HEK293 (cell line): ENCODE measurements at regions of chr15 and their contacts with region 1.

Region 1: DNA sequence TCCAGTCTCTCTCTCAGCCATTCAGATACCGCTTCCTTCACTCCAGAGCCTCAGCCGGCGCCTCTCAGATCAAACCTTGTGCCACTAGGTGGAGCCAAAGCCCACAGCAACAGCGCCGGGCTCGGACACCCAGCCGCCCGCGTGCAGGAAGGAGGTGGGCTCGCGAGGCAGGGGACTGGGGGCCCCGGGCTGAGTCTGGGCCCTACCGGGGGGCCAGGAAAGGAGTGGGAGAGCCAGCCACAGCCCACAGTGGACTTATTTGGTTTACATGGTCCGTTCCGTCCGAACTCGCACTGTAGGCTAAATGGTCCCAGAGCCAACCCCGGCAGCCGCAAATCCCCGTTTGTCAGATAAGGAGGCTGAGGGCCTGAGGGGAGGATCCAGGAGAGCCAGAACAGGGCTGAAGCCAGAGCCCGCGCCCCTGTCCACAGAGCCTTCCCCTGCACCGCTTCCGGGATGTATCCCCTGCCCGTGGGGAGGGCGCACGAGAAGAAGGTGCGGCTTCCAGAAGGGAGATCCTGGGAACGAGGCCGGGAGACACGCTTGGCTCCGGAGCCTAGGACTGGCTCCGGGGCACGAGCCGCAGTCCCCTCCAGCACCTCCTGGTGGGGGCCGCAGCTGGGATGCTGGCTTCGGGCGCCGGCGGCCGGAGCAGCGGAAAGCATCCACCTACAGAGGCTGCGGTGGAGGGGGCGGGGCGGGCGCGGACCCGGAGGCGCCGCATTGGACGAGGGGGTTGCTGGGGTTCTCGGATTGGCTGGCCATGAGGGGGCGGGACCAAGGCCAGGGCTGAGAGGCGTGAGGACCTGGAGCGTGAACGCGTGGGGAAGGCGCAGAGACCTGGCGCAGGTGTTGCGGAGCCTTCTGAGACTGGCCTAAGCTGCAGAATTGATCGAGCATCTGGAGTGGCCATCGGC is 6.5 kb upstream of the CYP11A1 start:
- H3K4me3 ChIP-seq: peak overlapping the region; percentile 45
- H3K27ac ChIP-seq: peak overlapping the region; percentile 54; the same call in 1 of the 2 replicates
- H3K4me1 ChIP-seq: peaks cover 9% of the 10 kb centered on the region
- CTCF ChIP-seq: peak; percentile 98

Region 2: DNA sequence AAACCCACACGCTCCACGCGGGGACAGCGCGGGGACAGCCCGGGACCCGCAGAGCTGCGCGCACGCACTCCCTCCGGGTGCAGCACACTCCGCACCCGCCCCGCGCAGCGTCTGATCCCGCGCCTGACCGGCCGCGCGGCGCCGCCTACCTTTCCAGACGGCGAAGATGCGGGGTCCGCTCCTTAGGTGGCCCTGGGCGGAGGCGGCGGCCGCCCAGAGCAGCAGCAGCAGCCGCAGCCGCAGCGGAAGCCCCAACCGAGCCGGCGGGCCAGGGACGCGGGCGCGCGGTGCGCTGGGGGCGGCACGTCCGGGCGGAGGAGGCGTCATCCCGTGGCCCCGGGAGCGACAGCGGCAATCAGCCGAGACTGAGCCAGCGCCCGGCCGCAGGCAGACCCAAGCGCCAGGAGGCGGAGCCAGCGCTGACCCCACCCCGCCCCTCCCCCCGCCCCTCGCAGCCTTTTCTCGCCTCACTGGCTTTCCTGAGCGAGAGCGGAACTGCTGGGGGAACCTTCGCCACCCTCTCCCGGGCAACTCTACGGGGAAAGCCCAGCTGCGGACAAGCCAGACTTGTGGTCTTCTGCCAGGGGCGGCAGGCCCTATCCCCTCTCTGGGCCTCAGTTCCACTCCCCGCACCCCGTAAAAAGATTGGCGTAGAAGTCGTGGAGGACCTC is 59.7 kb after region 1 on chr15 and contains the start of gene SEMA7A:
- CTCF ChIA-PET with region 1: interaction called, 768 read pairs
- POLR2A ChIA-PET with region 1: interaction called, 3 read pairs
- H3K4me3 ChIP-seq: peak within 1 kb of the TSS; percentile 57
- H3K27ac ChIP-seq: no peak within 1 kb of the TSS
- H3K4me1 ChIP-seq: peaks cover 4% of the 10 kb centered on the region
- CTCF ChIP-seq: no peak; the same call in 1 of the 2 replicates

Region 3: DNA sequence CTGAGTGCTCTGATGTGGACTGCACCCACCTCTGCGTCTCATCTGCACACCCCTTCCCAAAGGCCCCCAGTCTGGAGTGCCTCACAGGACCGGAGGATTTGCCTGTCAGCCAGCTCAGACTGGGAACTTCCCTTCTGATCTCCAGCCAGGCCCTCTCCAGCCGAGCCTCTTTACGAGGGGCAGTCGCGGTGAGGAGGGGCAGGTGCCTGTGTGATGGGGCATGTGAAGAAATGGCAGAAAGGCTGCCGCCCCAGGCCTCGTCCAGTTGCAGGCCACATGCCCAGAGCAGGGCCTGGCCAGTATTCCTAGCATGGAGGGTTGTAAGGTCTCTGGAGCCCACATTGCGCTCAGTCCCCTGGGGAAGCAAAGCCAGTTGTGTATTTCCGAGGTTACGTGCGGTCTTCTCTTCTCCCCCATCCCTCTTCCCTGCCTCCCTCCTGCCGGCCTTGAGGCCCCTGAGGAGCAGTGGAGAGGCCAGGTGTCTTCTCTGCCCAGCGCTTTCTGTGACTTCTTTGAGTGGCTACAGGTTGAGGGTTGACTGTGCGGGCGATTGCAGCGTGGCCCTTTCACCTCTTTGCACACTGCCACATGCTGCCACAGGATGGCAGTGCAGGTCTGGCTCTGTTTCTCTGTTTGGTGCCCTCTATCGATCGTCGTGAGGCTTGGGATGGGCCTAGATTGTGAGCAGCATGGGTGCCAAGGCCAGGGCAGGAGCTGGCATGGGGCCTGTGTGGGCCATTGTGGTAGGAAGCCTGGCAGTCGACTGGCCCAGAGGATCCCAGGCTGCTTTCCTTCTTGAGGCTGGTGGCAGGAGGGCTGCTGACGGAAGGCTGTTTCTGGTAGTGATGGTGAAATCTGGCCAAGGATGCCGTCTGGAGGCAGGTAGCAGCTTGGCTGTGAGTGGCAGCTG is 246.9 kb after region 1 on chr15:
- CTCF ChIA-PET with region 1: interaction called, 11 read pairs
- POLR2A ChIA-PET with region 1: interaction called, 3 read pairs
- H3K4me3 ChIP-seq: no peak overlapping the region
- H3K27ac ChIP-seq: no peak overlapping the region
- H3K4me1 ChIP-seq: peaks cover 9% of the 10 kb centered on the region
- CTCF ChIP-seq: peak; percentile 100